Panc1 (cell line): ENCODE measurements at regions of chr5 and their contacts with region 1.

Region 1: GRCh38 chr5:171365351-171365750 is 22.3 kb upstream of the NPM1 start:
- DNase-seq: no peak
- ATAC-seq: peak; percentile 26; the same call in 1 of the 2 replicates
- H3K4me3 ChIP-seq: no peak overlapping the region
- H3K27ac ChIP-seq: no peak overlapping the region
- H3K4me1 ChIP-seq: no peaks in the 10 kb centered on the region
- H3K27me3 ChIP-seq: no peaks in the 10 kb centered on the region
- CTCF ChIP-seq: peak; percentile 69

Region 2: GRCh38 chr5:170832254-170832653 is 533.1 kb before region 1 on chr5:
- CTCF ChIA-PET with region 1: interaction called, 14 read pairs
- POLR2A ChIA-PET with region 1: no interaction called
- in situ Hi-C with region 1: no loop called
- intact Hi-C with region 1: no loop called
- DNase-seq: no peak
- ATAC-seq: no peak
- H3K4me3 ChIP-seq: no peak overlapping the region
- H3K27ac ChIP-seq: no peak overlapping the region
- H3K4me1 ChIP-seq: no peaks in the 10 kb centered on the region
- H3K27me3 ChIP-seq: no peaks in the 10 kb centered on the region
- CTCF ChIP-seq: no peak

Region 3: GRCh38 chr5:170917113-170917512 is 448.2 kb before region 1 on chr5:
- CTCF ChIA-PET with region 1: no interaction called
- POLR2A ChIA-PET with region 1: no interaction called
- in situ Hi-C with region 1: no loop called
- intact Hi-C with region 1: no loop called
- DNase-seq: no peak
- ATAC-seq: no peak
- H3K4me3 ChIP-seq: no peak overlapping the region
- H3K27ac ChIP-seq: no peak overlapping the region
- H3K4me1 ChIP-seq: no peaks in the 10 kb centered on the region
- H3K27me3 ChIP-seq: no peaks in the 10 kb centered on the region
- CTCF ChIP-seq: no peak; the same call in 1 of the 2 replicates

Region 4: GRCh38 chr5:171055875-171056454 is 309.4 kb before region 1 on chr5:
- CTCF ChIA-PET with region 1: no interaction called
- POLR2A ChIA-PET with region 1: interaction called, 23 read pairs
- in situ Hi-C with region 1: no loop called
- intact Hi-C with region 1: no loop called
- DNase-seq: no peak
- ATAC-seq: no peak
- H3K4me3 ChIP-seq: no peak overlapping the region
- H3K27ac ChIP-seq: no peak overlapping the region
- H3K4me1 ChIP-seq: no peaks in the 10 kb centered on the region
- H3K27me3 ChIP-seq: no peaks in the 10 kb centered on the region
- CTCF ChIP-seq: no peak